ENCODE measurements at regions of chr7 and their contacts with region 1.

Region 1: GRCh38 chr7:32846701-32847100 is 44.9 kb downstream of the KBTBD2 start:
- DNase-seq: peak; percentile 80 to 96 (median 91)
- ATAC-seq: peak; percentile 100
- H3K4me3 ChIP-seq: no peak overlapping the region
- H3K4me3 Mint-ChIP-seq: no peak overlapping the region
- H3K27ac ChIP-seq: no peak overlapping the region
- H3K27ac Mint-ChIP-seq: no peak overlapping the region
- H3K4me1 ChIP-seq: peaks cover 4% of the 10 kb centered on the region
- H3K4me1 Mint-ChIP-seq: peaks cover 8% of the 10 kb centered on the region
- H3K27me3 ChIP-seq: no peaks in the 10 kb centered on the region
- H3K27me3 Mint-ChIP-seq: peaks cover 26% of the 10 kb centered on the region
- CTCF ChIP-seq: peak; percentile 80

Region 2: DNA sequence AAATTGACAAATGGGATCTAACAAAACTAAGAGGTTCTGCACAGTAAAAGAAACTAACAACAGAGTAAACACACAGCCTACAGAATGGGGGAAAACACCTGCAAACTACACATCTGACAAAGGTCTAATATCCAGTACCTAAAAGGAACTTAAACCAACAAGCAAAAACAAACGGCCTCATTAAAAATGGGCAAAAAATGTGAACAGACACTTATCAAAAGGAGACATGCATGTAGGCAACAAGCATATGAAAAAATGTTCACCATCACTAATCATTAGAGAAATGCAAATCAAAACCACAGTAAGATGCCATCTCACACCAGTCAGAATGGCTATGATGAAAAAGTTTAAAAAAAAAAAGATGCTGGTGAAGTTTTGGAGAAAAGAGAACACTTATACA is 152.5 kb before region 1 on chr7:
- CTCF ChIA-PET with region 1: interaction called, 3 read pairs
- POLR2A ChIA-PET with region 1: no interaction called
- intact Hi-C with region 1: loop called in 1 of 2 experiments (anchors 5 kb)
- DNase-seq: no peak
- ATAC-seq: no peak
- H3K4me3 ChIP-seq: no peak overlapping the region
- H3K4me3 Mint-ChIP-seq: no peak overlapping the region
- H3K27ac ChIP-seq: no peak overlapping the region
- H3K27ac Mint-ChIP-seq: no peak overlapping the region
- H3K4me1 ChIP-seq: no peaks in the 10 kb centered on the region
- H3K4me1 Mint-ChIP-seq: peaks cover 6% of the 10 kb centered on the region
- H3K27me3 ChIP-seq: no peaks in the 10 kb centered on the region
- H3K27me3 Mint-ChIP-seq: no peaks in the 10 kb centered on the region
- CTCF ChIP-seq: no peak

Region 3: GRCh38 chr7:32871624-32872371 is 25.1 kb after region 1 on chr7:
- CTCF ChIA-PET with region 1: interaction called, 16 read pairs
- POLR2A ChIA-PET with region 1: no interaction called
- intact Hi-C with region 1: no loop called
- DNase-seq: no peak
- ATAC-seq: no peak
- H3K4me3 ChIP-seq: no peak overlapping the region
- H3K4me3 Mint-ChIP-seq: no peak overlapping the region
- H3K27ac ChIP-seq: no peak overlapping the region
- H3K27ac Mint-ChIP-seq: no peak overlapping the region
- H3K4me1 ChIP-seq: peaks cover 9% of the 10 kb centered on the region
- H3K4me1 Mint-ChIP-seq: peaks cover 23% of the 10 kb centered on the region
- H3K27me3 ChIP-seq: no peaks in the 10 kb centered on the region
- H3K27me3 Mint-ChIP-seq: no peaks in the 10 kb centered on the region
- CTCF ChIP-seq: no peak

Region 4: DNA sequence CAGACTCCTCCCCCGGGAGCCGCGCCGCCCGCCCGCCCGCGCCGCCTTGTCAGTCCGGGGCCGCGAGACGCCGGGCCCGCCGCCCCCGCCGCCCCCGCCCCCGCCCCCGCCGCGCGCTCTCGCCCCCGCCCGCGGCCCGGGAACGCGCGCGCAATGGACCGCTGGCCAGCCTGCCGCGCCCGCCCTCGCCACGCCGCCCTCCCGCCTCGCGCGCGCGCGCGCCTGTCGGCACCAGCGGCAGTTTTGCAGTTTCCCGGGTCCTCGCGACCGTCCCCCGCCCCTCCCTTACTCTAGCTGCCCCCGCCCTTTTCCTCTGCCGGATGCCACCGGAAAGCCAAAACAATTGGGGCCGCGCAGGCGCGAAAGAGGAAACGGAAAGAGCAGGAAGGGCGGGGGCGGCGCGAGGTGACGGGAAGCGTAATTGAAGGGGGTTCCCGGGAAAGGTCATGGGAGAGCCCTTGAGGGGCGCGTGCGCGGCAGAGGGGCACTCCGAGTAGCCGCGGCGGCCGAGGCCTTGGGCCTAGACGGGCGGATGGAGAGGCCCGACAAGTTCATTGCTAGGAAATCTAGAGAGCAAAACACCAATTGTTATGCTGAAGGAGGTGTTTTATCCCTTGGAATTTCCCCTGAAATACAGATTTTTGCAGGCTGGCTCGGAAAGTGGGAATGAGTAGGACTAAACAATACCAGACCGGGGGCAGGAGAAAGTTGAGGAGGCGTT is 45.3 kb after region 1 on chr7:
- CTCF ChIA-PET with region 1: interaction called, 23 read pairs
- POLR2A ChIA-PET with region 1: interaction called, 12 read pairs
- intact Hi-C with region 1: loop called (anchors 1 kb)
- DNase-seq: peak; percentile 92 to 99 (median 97)
- ATAC-seq: peak; percentile 61
- H3K4me3 ChIP-seq: peak overlapping the region; percentile 72 to 83
- H3K4me3 Mint-ChIP-seq: peak overlapping the region; percentile 92
- H3K27ac ChIP-seq: peak overlapping the region; percentile 95 to 100
- H3K27ac Mint-ChIP-seq: peak overlapping the region; percentile 99
- H3K4me1 ChIP-seq: peaks cover 42% of the 10 kb centered on the region
- H3K4me1 Mint-ChIP-seq: peaks cover 48% of the 10 kb centered on the region
- H3K27me3 ChIP-seq: no peaks in the 10 kb centered on the region
- H3K27me3 Mint-ChIP-seq: no peaks in the 10 kb centered on the region
- CTCF ChIP-seq: no peak

Region 5: DNA sequence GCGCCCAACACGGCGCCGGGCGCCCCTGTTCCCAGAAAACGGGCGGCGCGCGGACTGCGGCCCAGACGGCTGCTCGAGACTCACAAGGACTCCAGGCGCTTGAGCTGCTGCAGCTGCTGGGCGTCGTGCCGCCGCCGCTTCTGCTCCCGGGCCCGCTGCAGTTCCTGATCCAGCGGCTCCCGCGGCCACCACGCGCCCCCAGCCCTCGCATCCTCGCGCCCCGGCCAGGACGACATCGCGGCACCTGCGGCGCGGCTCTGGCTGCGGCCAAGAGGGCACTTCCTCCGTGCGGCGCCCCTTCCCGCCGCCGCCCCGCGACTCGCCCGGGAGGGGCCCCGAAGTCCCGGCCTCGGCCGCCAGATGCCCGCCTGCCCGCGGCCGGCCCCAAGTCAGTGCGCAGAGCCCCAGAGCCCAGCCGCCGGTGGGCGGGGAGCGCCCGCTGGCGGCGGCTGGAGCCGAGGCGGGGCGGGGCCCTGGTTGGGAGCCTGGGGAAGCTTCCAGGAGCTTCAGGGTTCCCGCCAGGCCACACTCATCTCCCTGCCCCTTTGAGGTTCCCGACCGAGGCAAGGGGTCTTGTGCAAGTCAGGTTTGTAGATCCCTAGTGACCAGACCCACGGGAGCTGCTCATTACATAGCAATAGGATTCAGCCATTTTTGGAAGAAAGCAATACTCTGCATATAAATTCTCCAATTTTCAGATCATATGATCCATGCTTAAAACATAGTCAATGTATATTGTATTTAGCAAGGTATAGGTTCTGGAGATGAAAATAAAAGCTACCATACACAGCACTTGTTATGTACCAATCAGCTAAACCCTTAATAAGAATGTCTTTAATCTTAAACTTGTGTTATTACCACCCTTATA is 96.3 kb after region 1 on chr7:
- CTCF ChIA-PET with region 1: interaction called, 164 read pairs
- POLR2A ChIA-PET with region 1: interaction called, 4 read pairs
- intact Hi-C with region 1: loop called (anchors 1 kb)
- DNase-seq: peak; percentile 25 to 81 (median 67)
- ATAC-seq: peak; percentile 86
- H3K4me3 ChIP-seq: peak overlapping the region; percentile 55 to 66
- H3K4me3 Mint-ChIP-seq: peak overlapping the region; percentile 78
- H3K27ac ChIP-seq: peak overlapping the region in 1 of 2 experiments; percentile 30
- H3K27ac Mint-ChIP-seq: no peak overlapping the region
- H3K4me1 ChIP-seq: peaks cover 16% of the 10 kb centered on the region
- H3K4me1 Mint-ChIP-seq: peaks cover 8% of the 10 kb centered on the region
- H3K27me3 ChIP-seq: no peaks in the 10 kb centered on the region
- H3K27me3 Mint-ChIP-seq: peaks cover 10% of the 10 kb centered on the region
- CTCF ChIP-seq: peak; percentile 74

Region 6: GRCh38 chr7:33050535-33051318 is 204.0 kb after region 1 on chr7:
- CTCF ChIA-PET with region 1: interaction called, 16 read pairs
- POLR2A ChIA-PET with region 1: no interaction called
- intact Hi-C with region 1: loop called (anchors 1 to 2 kb)
- DNase-seq: peak in 5 of 9 experiments; percentile 11 to 73 (median 29)
- ATAC-seq: peak; percentile 63
- H3K4me3 ChIP-seq: no peak overlapping the region
- H3K4me3 Mint-ChIP-seq: no peak overlapping the region
- H3K27ac ChIP-seq: no peak overlapping the region
- H3K27ac Mint-ChIP-seq: no peak overlapping the region
- H3K4me1 ChIP-seq: peaks cover 20% of the 10 kb centered on the region
- H3K4me1 Mint-ChIP-seq: peaks cover 57% of the 10 kb centered on the region
- H3K27me3 ChIP-seq: no peaks in the 10 kb centered on the region
- H3K27me3 Mint-ChIP-seq: no peaks in the 10 kb centered on the region
- CTCF ChIP-seq: peak; percentile 78